Activated CD4-positive, alpha-beta memory T cell treated with anti-CD3 and anti-CD28 coated beads for 36 hours (primary cell): ENCODE measurements at regions of chr14 and their contacts with region 1.

Region 1: GRCh38 chr14:58427281-58428117 is at the starts of genes KIAA0586 and TIMM9:
- DNase-seq: peak; percentile 98
- H3K4me3 Mint-ChIP-seq: peak within 1 kb of the TSS; percentile 86
- H3K27ac Mint-ChIP-seq: peak within 1 kb of the TSS; percentile 91
- H3K4me1 Mint-ChIP-seq: peaks cover 45% of the 10 kb centered on the region
- H3K27me3 Mint-ChIP-seq: peaks cover 2% of the 10 kb centered on the region
- total RNA-seq, gene KIAA0586: 30.3 to 34.9 TPM
- total RNA-seq, gene TIMM9: 61.4 to 66.7 TPM

Region 2: DNA sequence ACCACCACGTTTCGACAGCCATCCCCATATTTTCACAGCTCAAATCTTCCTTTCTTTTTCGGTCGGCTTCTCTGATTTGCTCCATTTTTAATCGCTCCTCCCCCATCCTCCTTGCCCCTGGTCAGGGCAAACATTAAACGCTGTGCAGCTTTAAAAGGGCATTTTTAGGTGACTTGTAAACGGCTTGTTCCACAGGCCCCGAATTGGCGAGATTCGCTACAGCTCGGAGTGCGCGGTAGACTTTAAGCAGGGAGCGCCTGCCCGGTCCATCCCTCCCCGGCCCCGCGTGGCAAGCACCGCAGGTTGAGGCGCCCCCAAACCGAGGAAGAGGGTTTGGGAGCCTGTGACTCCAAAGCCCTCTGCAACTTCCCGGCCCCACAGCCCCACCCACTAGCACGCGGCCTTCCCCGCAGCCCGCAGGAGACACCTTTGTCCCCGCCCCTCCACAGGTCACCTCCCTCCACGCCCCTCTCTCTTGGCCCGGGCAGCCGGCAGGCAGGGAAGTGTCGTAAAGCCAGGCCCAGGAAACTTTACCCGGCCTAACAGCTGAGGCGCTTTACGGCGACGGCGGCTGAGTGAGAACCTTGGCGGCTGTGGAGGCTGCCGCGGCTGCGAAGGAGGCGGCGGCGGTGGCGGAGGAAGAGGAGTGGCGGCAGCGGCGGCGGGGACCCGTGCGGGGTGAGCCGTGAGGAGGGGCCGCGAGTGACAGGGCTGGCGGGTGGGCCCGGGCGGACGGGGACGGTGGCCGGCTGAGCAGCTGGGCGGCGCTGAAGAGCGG is 1037.3 kb before region 1 on chr14 and contains the start of gene NAA30:
- CTCF ChIA-PET with region 1: no interaction called
- POLR2A ChIA-PET with region 1: no interaction called
- intact Hi-C with region 1: loop called (anchors 10 kb)
- DNase-seq: peak; percentile 96
- H3K4me3 Mint-ChIP-seq: peak within 1 kb of the TSS; percentile 82
- H3K27ac Mint-ChIP-seq: peak within 1 kb of the TSS; percentile 92
- H3K4me1 Mint-ChIP-seq: peaks cover 44% of the 10 kb centered on the region
- H3K27me3 Mint-ChIP-seq: no peaks in the 10 kb centered on the region
- total RNA-seq, gene NAA30: 14.4 to 16.9 TPM

Region 3: GRCh38 chr14:58199726-58200479 is 227.6 kb before region 1 on chr14 and contains the start of gene ACTR10:
- CTCF ChIA-PET with region 1: no interaction called
- POLR2A ChIA-PET with region 1: interaction called, 8 read pairs
- intact Hi-C with region 1: loop called (anchors 1 kb)
- DNase-seq: peak; percentile 93
- H3K4me3 Mint-ChIP-seq: peak within 1 kb of the TSS; percentile 95
- H3K27ac Mint-ChIP-seq: peak within 1 kb of the TSS; percentile 88
- H3K4me1 Mint-ChIP-seq: peaks cover 29% of the 10 kb centered on the region
- H3K27me3 Mint-ChIP-seq: no peaks in the 10 kb centered on the region
- total RNA-seq, gene ACTR10: 45.3 to 47.0 TPM

Region 4: GRCh38 chr14:58331111-58331510 is 96.4 kb before region 1 on chr14:
- CTCF ChIA-PET with region 1: no interaction called
- POLR2A ChIA-PET with region 1: no interaction called
- intact Hi-C with region 1: loop called (anchors 1 kb)
- DNase-seq: peak; percentile 88
- H3K4me3 Mint-ChIP-seq: peak overlapping the region; percentile 62
- H3K27ac Mint-ChIP-seq: peak overlapping the region; percentile 89
- H3K4me1 Mint-ChIP-seq: peaks cover 13% of the 10 kb centered on the region
- H3K27me3 Mint-ChIP-seq: no peaks in the 10 kb centered on the region

Region 5: DNA sequence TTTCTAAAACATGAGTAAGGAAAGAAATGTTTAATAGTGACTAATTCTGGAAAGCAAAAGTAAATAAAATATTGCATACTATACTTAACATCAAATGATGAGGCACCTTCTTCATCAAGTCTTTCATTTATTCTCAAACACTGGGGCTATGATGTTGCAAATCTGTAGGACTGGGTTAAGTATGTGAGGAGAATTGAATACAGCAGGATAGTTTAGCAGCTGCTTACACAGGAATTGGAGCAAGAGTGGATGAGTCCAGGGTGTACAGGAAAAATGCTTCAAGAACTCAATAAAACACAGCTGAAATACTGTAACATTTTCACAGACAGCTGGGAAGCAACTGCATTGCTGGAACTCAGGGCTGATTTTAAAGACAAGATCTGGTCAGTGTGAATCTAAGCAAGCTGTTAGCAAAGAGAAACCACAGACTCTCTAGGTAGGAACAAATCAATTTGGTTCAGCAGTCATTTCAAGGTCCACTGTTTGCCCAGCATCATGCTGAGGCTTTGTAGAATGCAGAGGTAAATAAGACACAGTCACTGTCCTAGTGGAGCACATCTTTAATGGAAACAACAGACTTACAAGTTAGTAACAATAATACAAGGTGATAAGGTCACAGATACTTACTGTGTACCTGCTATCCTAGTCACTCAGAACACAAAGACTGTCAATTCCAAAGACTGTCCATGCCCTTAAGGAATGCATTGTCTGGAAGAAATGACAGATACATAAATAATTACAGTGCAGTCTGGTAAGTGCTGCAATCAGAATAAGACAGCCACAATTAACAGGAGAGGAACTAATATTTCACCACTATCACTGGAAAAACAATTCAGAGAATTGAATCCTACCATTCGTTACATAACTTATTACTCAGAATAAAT is 113.5 kb after region 1 on chr14:
- CTCF ChIA-PET with region 1: no interaction called
- POLR2A ChIA-PET with region 1: no interaction called
- intact Hi-C with region 1: no loop called
- DNase-seq: no peak
- H3K4me3 Mint-ChIP-seq: no peak overlapping the region
- H3K27ac Mint-ChIP-seq: no peak overlapping the region
- H3K4me1 Mint-ChIP-seq: no peaks in the 10 kb centered on the region
- H3K27me3 Mint-ChIP-seq: no peaks in the 10 kb centered on the region

Region 6: GRCh38 chr14:58571769-58572472 is 144.4 kb after region 1 on chr14:
- CTCF ChIA-PET with region 1: no interaction called
- POLR2A ChIA-PET with region 1: interaction called, 4 read pairs
- intact Hi-C with region 1: loop called (anchors 1 kb)
- DNase-seq: peak; percentile 77
- H3K4me3 Mint-ChIP-seq: peak overlapping the region; percentile 11
- H3K27ac Mint-ChIP-seq: peak overlapping the region; percentile 87
- H3K4me1 Mint-ChIP-seq: peaks cover 39% of the 10 kb centered on the region
- H3K27me3 Mint-ChIP-seq: no peaks in the 10 kb centered on the region

Region 7: GRCh38 chr14:59189786-59190771 is 762.6 kb after region 1 on chr14:
- CTCF ChIA-PET with region 1: no interaction called
- POLR2A ChIA-PET with region 1: interaction called, 3 read pairs
- intact Hi-C with region 1: loop called (anchors 1 kb)
- DNase-seq: peak; percentile 86
- H3K4me3 Mint-ChIP-seq: peak overlapping the region; percentile 93
- H3K27ac Mint-ChIP-seq: peak overlapping the region; percentile 49
- H3K4me1 Mint-ChIP-seq: peaks cover 6% of the 10 kb centered on the region
- H3K27me3 Mint-ChIP-seq: peaks cover 3% of the 10 kb centered on the region